Tibial artery (tissue), 4 donors: ENCODE measurements at regions of chr11 and their contacts with region 1.

Region 1: GRCh38 chr11:79244241-79244772 is 196.5 kb downstream of the TENM4 start:
- DNase-seq: peak in 1 of 2 donors; percentile 39
- H3K4me3 ChIP-seq: no peak overlapping the region
- H3K27ac ChIP-seq: peak overlapping the region; percentile 78
- H3K4me1 ChIP-seq: peaks cover 0 to 48% (median 26%) of the 10 kb centered on the region in 4 donors
- H3K27me3 ChIP-seq: no peaks in the 10 kb centered on the region
- CTCF ChIP-seq: no peak

Region 2: DNA sequence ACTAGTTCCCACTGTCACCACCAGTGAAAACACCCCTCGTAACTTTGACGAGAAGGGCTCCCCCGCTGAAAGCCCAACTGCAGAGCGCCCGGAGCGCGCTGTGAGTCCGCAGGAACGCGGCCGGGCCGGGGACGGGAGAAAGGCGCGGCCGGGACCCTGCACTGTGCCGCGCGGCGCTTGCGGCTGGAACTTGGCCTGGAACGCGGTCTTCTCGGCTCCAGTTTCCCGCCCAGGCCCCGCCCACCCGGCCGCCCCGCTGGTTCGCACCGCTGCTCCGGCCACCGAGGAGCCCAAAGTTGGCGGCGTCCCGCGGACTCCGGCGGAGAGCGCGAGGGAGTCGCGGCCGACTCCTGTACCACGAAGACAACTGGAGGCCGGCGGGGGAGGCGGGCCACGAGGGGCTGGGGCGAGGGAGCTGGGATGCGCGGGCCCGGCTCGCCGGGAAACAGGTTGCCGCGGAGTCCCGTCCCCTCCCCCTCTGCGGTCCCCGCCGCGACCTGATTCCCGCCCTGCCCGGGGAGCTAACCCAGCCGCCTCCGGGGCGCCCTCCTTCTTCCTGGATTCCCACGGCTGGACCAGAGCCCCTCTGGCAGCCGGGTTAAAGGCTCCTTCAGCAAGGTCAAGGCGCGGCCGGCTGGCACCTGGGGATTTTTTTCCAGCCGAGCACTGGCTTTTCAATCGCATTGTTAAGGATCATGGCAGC is 193.1 kb after region 1 on chr11:
- intact Hi-C with region 1: loop called (anchors 10 kb)
- DNase-seq: peak; percentile 47 to 88
- H3K4me3 ChIP-seq: peak overlapping the region; percentile 67 to 71
- H3K27ac ChIP-seq: peak overlapping the region; percentile 84 to 87
- H3K4me1 ChIP-seq: peaks cover 0 to 48% (median 31%) of the 10 kb centered on the region in 4 donors
- H3K27me3 ChIP-seq: no peaks in the 10 kb centered on the region
- CTCF ChIP-seq: no peak